ENCODE measurements at regions of chr15 and their contacts with region 1.

Region 1: DNA sequence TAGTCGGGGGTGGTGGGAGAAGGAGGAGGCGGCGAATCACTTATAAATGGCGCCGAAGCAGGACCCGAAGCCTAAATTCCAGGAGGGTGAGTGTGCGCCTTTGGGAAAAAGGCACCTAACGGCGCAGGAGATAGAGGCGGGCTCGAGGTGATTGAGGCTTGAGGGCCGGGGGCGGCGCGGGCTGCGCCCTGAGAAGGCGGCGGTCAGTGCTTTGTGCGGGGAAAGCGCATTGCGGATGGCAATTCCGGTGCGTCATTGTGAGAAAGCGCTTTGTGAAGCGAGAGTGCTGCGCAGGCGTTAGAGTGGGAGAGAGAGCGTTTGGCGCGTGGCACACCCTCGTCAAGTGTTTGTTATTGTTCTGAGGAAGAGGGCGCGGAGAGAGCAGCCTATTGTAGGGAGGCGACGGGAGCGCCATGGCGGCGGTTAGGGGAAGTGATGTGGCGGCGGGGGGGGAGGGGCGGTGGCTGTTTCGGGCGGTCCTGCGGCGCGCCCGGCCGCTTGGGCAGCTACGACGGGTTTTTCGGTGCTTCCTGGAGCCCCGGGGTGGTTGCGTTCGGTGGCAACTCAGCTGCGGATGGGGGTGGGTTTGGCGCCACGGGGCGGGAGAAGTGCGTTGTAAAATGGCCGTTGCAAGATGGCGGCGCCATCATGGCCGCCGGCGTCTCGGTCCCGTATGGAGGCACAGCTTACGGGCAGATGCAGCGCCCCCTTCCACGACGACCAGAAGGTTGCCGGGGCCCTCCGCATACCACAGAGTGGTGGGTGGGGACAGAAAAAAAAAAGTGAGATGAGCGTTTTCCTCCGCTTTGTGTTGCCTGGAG is 492 bp downstream of the MORF4L1 start:
- DNase-seq: peak; percentile 94
- ATAC-seq: peak; percentile 73
- H3K4me3 ChIP-seq: peak overlapping the region; percentile 82 to 100 (median 100)
- H3K4me3 Mint-ChIP-seq: peak overlapping the region; percentile 97
- H3K27ac ChIP-seq: peak overlapping the region; percentile 95 to 100
- H3K27ac Mint-ChIP-seq: peak overlapping the region; percentile 100
- H3K4me1 ChIP-seq: peaks cover 29 to 47% of the 10 kb centered on the region in 2 donors
- H3K4me1 Mint-ChIP-seq: peaks cover 44% of the 10 kb centered on the region
- H3K27me3 ChIP-seq: no peaks in the 10 kb centered on the region
- H3K27me3 Mint-ChIP-seq: no peaks in the 10 kb centered on the region
- CTCF ChIP-seq: peak; percentile 46

Region 2: GRCh38 chr15:78757636-78757905 is 115.6 kb before region 1 on chr15:
- CTCF ChIA-PET with region 1: interaction called, 9 read pairs
- POLR2A ChIA-PET with region 1: interaction called, 10 read pairs
- intact Hi-C with region 1: loop called (anchors 1 kb)
- DNase-seq: no peak
- ATAC-seq: no peak
- H3K4me3 ChIP-seq: no peak overlapping the region
- H3K4me3 Mint-ChIP-seq: peak overlapping the region; percentile 87
- H3K27ac ChIP-seq: peak overlapping the region; percentile 91 to 99
- H3K27ac Mint-ChIP-seq: peak overlapping the region; percentile 99
- H3K4me1 ChIP-seq: peaks cover 61 to 68% of the 10 kb centered on the region in 2 donors
- H3K4me1 Mint-ChIP-seq: peaks cover 53% of the 10 kb centered on the region
- H3K27me3 ChIP-seq: no peaks in the 10 kb centered on the region
- H3K27me3 Mint-ChIP-seq: no peaks in the 10 kb centered on the region
- CTCF ChIP-seq: no peak

Region 3: GRCh38 chr15:78790030-78790429 is 83.2 kb before region 1 on chr15:
- CTCF ChIA-PET with region 1: no interaction called
- POLR2A ChIA-PET with region 1: no interaction called
- intact Hi-C with region 1: no loop called
- DNase-seq: no peak
- ATAC-seq: no peak
- H3K4me3 ChIP-seq: no peak overlapping the region
- H3K4me3 Mint-ChIP-seq: no peak overlapping the region
- H3K27ac ChIP-seq: no peak overlapping the region
- H3K27ac Mint-ChIP-seq: no peak overlapping the region
- H3K4me1 ChIP-seq: no peaks in the 10 kb centered on the region
- H3K4me1 Mint-ChIP-seq: no peaks in the 10 kb centered on the region
- H3K27me3 ChIP-seq: no peaks in the 10 kb centered on the region
- H3K27me3 Mint-ChIP-seq: no peaks in the 10 kb centered on the region
- CTCF ChIP-seq: no peak

Region 4: DNA sequence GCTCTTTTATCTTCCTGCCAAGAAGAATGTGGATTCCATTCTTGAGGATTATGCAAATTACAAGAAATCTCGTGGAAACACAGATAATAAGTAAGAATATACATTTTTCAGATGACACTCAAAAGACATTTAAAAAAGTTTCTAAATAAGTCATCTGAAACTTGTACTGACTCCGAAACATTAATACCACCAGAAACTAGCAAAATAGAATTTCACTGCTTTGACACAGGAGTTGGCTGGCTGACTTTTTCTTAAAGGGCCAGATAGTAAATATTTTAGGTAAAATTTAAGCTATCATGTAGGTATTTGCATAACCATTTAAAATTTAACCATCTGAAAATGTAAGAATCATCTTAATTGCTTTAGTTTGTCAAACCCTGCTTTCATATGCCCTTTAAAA is 20.4 kb after region 1 on chr15:
- CTCF ChIA-PET with region 1: interaction called, 4 read pairs
- POLR2A ChIA-PET with region 1: interaction called, 4 read pairs
- intact Hi-C with region 1: loop called (anchors 2 kb)
- DNase-seq: no peak
- ATAC-seq: no peak
- H3K4me3 ChIP-seq: no peak overlapping the region
- H3K4me3 Mint-ChIP-seq: no peak overlapping the region
- H3K27ac ChIP-seq: no peak overlapping the region
- H3K27ac Mint-ChIP-seq: no peak overlapping the region
- H3K4me1 ChIP-seq: no peaks in the 10 kb centered on the region
- H3K4me1 Mint-ChIP-seq: no peaks in the 10 kb centered on the region
- H3K27me3 ChIP-seq: no peaks in the 10 kb centered on the region
- H3K27me3 Mint-ChIP-seq: no peaks in the 10 kb centered on the region
- CTCF ChIP-seq: no peak

Region 5: DNA sequence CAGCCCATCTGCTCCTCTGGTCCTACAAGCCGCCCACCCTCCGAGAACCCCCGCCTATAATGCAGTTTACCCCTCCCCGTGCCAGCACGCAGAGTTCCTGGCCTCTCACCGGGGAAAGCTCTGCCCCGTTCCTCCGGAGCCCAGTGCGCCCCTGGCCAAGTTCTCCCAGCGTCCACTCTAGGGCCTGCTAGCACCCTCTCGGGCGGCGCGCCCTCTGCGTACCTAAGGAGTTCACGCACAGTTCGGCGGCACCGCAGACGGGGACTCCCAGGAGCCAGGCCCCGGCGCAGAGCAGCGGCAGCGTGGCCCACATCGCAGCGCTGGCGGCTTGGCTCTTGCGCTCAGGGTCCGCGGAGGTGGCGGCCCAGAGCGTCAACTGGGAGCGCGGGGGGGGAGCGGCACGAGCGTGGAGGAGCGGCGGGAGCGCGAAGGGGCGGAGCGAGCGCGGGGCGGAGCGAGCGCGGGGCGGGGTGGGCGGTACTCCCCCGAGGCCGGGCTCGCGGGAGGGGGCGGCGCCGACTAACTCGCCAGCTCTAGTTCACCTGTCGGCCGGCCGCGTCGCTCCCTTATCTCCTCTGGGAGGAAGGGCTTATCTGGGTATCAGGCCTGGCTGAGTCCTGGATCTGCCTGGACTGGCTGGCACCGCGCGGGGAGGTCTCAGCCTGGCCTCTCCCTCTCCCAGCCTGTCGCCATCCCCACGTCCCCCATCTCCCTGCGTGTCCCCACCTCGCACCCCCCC is 71.7 kb after region 1 on chr15 and contains the start of gene CTSH:
- CTCF ChIA-PET with region 1: no interaction called
- POLR2A ChIA-PET with region 1: interaction called, 11 read pairs
- intact Hi-C with region 1: loop called (anchors 2 kb)
- DNase-seq: peak; percentile 91
- ATAC-seq: peak; percentile 95
- H3K4me3 ChIP-seq: peak within 1 kb of the TSS; percentile 61 to 97 (median 94)
- H3K4me3 Mint-ChIP-seq: peak within 1 kb of the TSS; percentile 98
- H3K27ac ChIP-seq: peak within 1 kb of the TSS; percentile 77 to 83
- H3K27ac Mint-ChIP-seq: peak within 1 kb of the TSS; percentile 95
- H3K4me1 ChIP-seq: peaks cover 34 to 48% of the 10 kb centered on the region in 2 donors
- H3K4me1 Mint-ChIP-seq: peaks cover 32% of the 10 kb centered on the region
- H3K27me3 ChIP-seq: no peaks in the 10 kb centered on the region
- H3K27me3 Mint-ChIP-seq: no peaks in the 10 kb centered on the region
- CTCF ChIP-seq: no peak
- total RNA-seq, gene CTSH: 438 and 441 TPM in 2 replicates

Region 6: DNA sequence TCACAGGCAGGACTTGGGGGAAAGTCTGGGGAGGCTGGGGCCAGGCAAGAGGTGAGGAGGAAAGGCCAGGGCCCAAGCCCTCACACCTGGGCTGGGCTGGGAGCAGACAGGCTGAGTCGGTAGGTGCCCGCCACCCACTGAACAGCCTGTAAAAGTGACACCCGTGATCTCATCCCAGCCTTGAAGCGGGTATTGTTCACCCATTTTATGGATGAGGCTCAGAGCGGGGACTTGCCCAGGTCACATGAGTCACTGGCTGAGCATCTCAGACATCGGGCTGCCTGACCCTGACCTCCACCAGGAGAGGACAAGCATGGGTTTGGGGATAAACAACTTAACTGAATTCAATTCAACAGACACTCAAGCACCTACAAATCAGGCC is 123.7 kb after region 1 on chr15:
- CTCF ChIA-PET with region 1: no interaction called
- POLR2A ChIA-PET with region 1: no interaction called
- intact Hi-C with region 1: no loop called
- DNase-seq: no peak
- ATAC-seq: no peak
- H3K4me3 ChIP-seq: no peak overlapping the region
- H3K4me3 Mint-ChIP-seq: no peak overlapping the region
- H3K27ac ChIP-seq: no peak overlapping the region
- H3K27ac Mint-ChIP-seq: peak overlapping the region; percentile 34
- H3K4me1 ChIP-seq: peaks cover 0 to 15% of the 10 kb centered on the region in 2 donors
- H3K4me1 Mint-ChIP-seq: peaks cover 12% of the 10 kb centered on the region
- H3K27me3 ChIP-seq: no peaks in the 10 kb centered on the region
- H3K27me3 Mint-ChIP-seq: no peaks in the 10 kb centered on the region
- CTCF ChIP-seq: no peak

Region 7: DNA sequence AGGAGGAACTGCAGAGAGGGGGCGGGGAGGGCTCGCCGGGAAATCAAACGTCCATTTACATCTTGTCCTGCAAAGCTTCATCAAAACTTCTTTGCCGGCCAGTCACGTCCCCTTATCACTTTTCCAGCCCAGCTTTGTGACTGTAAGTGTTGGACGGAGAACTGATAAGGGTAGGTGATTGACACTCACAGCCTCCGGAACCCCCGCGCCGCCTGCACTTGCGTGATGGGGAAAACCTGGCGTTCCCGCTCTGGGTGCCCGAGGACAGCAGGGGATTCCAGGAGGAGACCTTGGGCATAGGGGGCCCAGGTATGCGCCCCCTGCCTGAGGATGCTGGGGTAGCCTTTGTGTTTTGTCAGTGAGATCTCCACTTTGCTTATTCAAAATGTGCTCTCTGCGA is 336.5 kb after region 1 on chr15:
- CTCF ChIA-PET with region 1: no interaction called
- POLR2A ChIA-PET with region 1: no interaction called
- intact Hi-C with region 1: no loop called
- DNase-seq: no peak
- ATAC-seq: no peak
- H3K4me3 ChIP-seq: no peak overlapping the region
- H3K4me3 Mint-ChIP-seq: no peak overlapping the region
- H3K27ac ChIP-seq: no peak overlapping the region
- H3K27ac Mint-ChIP-seq: no peak overlapping the region
- H3K4me1 ChIP-seq: no peaks in the 10 kb centered on the region
- H3K4me1 Mint-ChIP-seq: no peaks in the 10 kb centered on the region
- H3K27me3 ChIP-seq: peaks cover 0 to 29% (median 12%) of the 10 kb centered on the region in 4 experiments
- H3K27me3 Mint-ChIP-seq: peaks cover 72% of the 10 kb centered on the region
- CTCF ChIP-seq: no peak

Region 8: DNA sequence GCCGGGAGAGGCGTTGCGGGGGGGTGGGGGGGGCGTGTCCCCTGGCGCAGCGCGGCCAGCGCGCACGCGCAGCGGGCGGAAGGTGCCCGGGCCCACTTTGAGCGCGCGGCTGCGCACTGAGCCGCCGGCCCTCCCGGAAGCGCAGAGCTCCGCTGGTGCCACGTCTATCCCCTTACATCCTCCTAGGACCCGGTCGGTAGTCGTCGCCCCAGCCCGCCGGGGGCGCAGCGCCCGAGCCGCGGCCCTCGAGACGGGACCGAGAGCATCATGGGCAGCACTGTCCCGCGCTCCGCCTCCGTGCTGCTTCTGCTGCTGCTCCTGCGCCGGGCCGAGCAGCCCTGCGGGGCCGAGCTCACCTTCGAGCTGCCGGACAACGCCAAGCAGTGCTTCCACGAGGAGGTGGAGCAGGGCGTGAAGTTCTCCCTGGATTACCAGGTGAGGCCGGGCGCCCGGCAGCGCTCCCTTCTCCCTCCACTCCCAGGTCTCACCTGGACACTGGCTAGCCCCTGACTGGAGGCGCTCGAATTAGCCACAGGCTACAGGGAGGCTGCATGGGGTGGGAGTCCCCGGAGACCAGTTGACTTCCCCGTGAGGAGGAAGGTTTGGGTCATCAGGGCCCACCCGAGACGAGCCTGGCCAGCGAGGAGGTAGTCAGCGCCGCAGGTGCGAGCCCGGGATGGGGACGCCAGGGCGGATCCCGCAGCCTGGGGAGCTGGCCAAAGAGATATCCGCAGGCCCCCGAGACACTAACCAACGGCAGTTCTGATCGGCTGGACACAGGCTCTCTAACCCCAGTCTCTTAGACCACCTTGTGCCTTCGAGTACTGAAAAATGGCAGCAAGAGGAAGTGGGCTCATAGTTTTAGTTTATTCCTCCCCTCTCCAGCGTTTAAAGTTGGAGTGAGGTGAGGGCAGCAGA is 438.1 kb after region 1 on chr15 and contains the start of gene TMED3:
- CTCF ChIA-PET with region 1: no interaction called
- POLR2A ChIA-PET with region 1: no interaction called
- intact Hi-C with region 1: loop called (anchors 10 kb)
- DNase-seq: peak; percentile 89
- ATAC-seq: peak; percentile 91
- H3K4me3 ChIP-seq: peak within 1 kb of the TSS; percentile 65 to 93 (median 85)
- H3K4me3 Mint-ChIP-seq: peak within 1 kb of the TSS; percentile 92
- H3K27ac ChIP-seq: peak within 1 kb of the TSS; percentile 6 to 64
- H3K27ac Mint-ChIP-seq: peak within 1 kb of the TSS; percentile 82
- H3K4me1 ChIP-seq: peaks cover 14 to 22% of the 10 kb centered on the region in 2 donors
- H3K4me1 Mint-ChIP-seq: peaks cover 27% of the 10 kb centered on the region
- H3K27me3 ChIP-seq: peaks cover 0 to 6% (median 0%) of the 10 kb centered on the region in 4 experiments
- H3K27me3 Mint-ChIP-seq: peaks cover 7% of the 10 kb centered on the region
- CTCF ChIP-seq: peak; percentile 34
- total RNA-seq, gene TMED3: 20.7 and 22.3 TPM in 2 replicates

Region 9: DNA sequence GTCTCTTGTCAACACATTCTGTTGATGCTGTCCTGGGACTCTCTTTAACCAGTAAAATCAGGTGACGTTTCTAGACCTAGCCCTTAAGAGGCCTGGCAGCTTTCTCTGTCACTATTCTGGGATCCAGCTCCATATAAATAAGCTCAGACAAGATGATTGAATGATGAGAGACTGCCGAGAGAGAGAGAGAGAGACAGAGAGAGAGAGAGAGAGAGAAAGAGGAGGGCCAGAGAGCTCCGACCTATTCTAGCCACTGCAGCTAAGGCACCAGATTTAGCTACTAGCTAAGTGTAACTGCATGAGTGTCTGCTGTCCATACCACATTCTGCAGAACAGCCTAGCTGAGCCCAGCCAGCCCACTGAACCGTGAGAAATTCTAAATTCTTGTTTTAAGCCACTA is 1414.9 kb after region 1 on chr15:
- CTCF ChIA-PET with region 1: no interaction called
- POLR2A ChIA-PET with region 1: no interaction called
- intact Hi-C with region 1: no loop called
- DNase-seq: no peak
- ATAC-seq: no peak
- H3K4me3 ChIP-seq: no peak overlapping the region
- H3K4me3 Mint-ChIP-seq: no peak overlapping the region
- H3K27ac ChIP-seq: no peak overlapping the region
- H3K27ac Mint-ChIP-seq: no peak overlapping the region
- H3K4me1 ChIP-seq: no peaks in the 10 kb centered on the region
- H3K4me1 Mint-ChIP-seq: no peaks in the 10 kb centered on the region
- H3K27me3 ChIP-seq: peaks cover 0 to 3% (median 0%) of the 10 kb centered on the region in 4 experiments
- H3K27me3 Mint-ChIP-seq: peaks cover 12% of the 10 kb centered on the region
- CTCF ChIP-seq: no peak

Measured in B cell (primary cell).